Panc1 (cell line): ENCODE measurements at regions of chr5 and their contacts with region 1.

Region 1: GRCh38 chr5:147369742-147370374 is 135.0 kb downstream of the STK32A start:
- DNase-seq: no peak
- ATAC-seq: no peak
- H3K4me3 ChIP-seq: no peak overlapping the region
- H3K27ac ChIP-seq: no peak overlapping the region
- H3K4me1 ChIP-seq: no peaks in the 10 kb centered on the region
- H3K27me3 ChIP-seq: no peaks in the 10 kb centered on the region
- CTCF ChIP-seq: peak; percentile 68; the same call in 1 of the 2 replicates

Region 2: GRCh38 chr5:147223948-147224791 is 145.7 kb before region 1 on chr5:
- CTCF ChIA-PET with region 1: no interaction called
- POLR2A ChIA-PET with region 1: no interaction called
- in situ Hi-C with region 1: no loop called
- intact Hi-C with region 1: loop called (anchors 5 kb)
- DNase-seq: no peak
- ATAC-seq: peak; percentile 83; the same call in 1 of the 2 replicates
- H3K4me3 ChIP-seq: no peak overlapping the region
- H3K27ac ChIP-seq: no peak overlapping the region
- H3K4me1 ChIP-seq: no peaks in the 10 kb centered on the region
- H3K27me3 ChIP-seq: no peaks in the 10 kb centered on the region
- CTCF ChIP-seq: peak; percentile 48; the same call in 1 of the 2 replicates

Region 3: DNA sequence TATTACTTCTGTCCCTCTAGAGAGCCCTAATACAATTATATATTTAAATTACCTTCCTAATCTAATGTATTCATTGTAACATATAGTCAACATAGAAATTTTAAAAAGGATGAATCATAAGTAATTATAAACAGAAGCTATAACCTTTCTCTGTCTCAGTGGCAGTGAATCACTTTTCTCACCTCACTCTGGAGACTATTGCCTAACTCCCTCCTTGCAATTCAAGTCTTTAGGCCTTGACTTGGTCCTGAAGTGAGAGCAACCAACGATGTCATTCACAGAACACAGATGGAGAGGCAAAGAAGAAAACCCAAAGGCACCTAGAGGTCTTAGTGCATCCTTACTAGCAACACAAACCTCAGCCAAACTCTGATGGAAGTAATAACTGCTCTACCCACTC is 273.3 kb after region 1 on chr5:
- CTCF ChIA-PET with region 1: no interaction called
- POLR2A ChIA-PET with region 1: no interaction called
- in situ Hi-C with region 1: no loop called
- intact Hi-C with region 1: no loop called
- DNase-seq: no peak
- ATAC-seq: no peak
- H3K4me3 ChIP-seq: no peak overlapping the region
- H3K27ac ChIP-seq: no peak overlapping the region
- H3K4me1 ChIP-seq: no peaks in the 10 kb centered on the region
- H3K27me3 ChIP-seq: no peaks in the 10 kb centered on the region
- CTCF ChIP-seq: no peak